ENCODE measurements at regions of chr2 and their contacts with region 1.

Region 1: GRCh38 chr2:636641-637405 is 40.4 kb downstream of the TMEM18 start:
- DNase-seq: no peak
- ATAC-seq: peak; percentile 76

Region 2: GRCh38 chr2:175880-176800 is 460.7 kb before region 1 on chr2:
- intact Hi-C with region 1: loop called (anchors 2 kb)
- DNase-seq: no peak
- ATAC-seq: no peak

Region 3: DNA sequence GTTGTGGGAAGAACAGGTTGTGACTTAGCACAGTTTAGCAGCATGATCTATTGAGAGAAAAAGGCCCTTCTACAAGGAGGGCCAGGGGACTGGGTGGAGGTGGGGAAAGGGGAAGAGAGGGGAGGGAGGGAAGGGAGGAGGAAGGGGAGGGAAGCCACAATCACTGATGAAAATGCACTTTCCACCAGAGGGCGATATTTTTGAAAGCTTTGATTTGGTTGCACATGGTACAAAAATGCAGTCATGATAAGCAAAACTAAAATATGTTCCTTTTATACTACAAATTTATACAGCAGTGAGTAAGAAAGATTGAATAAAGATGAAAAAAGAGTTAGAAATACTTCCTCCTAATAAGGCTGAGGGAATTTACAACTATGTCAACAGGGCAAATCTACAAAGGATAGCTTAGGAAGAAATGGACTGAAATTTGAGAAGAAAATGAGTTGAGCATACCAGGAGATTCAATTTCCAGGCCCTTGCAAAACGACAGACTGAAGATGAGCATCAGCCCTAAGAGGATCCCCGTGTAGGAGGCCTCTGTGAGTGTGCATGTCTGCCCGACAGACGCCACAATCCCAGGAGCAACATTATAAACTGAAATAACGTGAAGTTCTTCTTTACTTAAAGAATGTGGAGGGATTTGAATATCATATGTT is 390.2 kb before region 1 on chr2:
- intact Hi-C with region 1: loop called (anchors 5 kb)
- DNase-seq: no peak
- ATAC-seq: no peak

Region 4: DNA sequence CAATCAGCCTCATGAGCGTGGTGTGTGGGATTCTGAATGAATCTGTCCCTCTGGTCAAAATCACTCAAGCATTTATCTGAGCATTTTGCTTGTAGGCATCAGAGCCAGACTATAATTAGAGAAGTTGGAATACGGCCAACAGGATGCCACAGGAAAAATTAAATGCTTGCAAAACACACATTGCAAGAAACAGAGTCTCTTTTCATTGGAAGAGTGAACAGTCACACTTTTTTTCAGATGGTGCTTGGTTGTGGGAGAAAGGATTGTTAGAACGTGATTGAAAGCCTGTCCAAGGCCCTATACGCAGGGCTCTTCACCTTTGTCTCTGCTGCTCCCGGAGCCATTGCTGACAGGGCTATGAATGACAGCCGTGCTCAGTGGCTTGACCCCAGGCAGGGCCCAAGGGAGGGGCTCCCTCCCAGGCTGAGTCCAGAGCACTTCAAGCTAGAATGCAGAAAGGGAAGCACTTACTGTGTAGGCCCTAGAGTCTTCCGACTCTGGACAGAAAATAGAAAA is 373.6 kb after region 1 on chr2:
- intact Hi-C with region 1: no loop called
- DNase-seq: no peak
- ATAC-seq: peak; percentile 77

Measured in Right ventricle myocardium inferior (tissue), 1 donor.